Endothelial cell of umbilical vein (primary cell): ENCODE measurements at regions of chr3 and their contacts with region 1.

Region 1: DNA sequence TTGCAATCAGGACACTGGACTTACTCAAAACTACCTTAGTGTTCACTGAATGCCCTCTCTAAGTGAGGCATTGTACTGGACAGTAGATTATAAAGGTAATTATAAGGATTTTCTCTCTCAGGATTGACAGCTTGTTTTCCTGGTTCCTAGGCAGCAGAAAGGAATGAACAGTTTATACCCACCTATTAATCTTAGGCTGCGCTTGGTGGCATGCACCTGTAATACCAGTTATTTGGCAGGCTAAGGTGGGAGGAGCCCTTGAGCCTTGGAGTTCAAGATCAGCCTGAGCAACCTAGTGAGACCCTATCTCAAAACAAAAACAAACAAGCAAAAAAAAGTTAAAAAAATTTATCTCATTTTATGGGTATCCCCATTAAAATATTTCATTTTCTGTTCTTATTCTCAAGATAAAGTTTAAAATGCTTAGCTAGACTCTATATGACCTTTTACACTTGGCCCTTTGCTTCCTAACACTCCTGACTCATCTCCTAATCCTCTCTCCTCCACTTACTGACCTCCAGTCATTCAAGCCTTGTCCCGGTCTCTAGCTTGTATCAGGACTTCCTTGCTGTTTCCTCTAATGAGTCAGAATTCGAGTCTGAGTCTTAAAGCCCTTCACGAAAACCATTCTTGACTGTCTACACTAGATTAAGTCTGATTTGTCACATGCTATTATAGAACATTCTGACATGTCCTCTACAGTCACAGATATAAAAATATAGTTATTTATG is 348.6 kb downstream of the NLGN1 start:
- DNase-seq: peak; percentile 93
- H3K4me3 ChIP-seq: no peak overlapping the region
- H3K27ac ChIP-seq: peak overlapping the region; percentile 96
- H3K4me1 ChIP-seq: peaks cover 97% of the 10 kb centered on the region
- H3K27me3 ChIP-seq: no peaks in the 10 kb centered on the region
- CTCF ChIP-seq: no peak
- POLR2A ChIP-seq: no peak

Region 2: DNA sequence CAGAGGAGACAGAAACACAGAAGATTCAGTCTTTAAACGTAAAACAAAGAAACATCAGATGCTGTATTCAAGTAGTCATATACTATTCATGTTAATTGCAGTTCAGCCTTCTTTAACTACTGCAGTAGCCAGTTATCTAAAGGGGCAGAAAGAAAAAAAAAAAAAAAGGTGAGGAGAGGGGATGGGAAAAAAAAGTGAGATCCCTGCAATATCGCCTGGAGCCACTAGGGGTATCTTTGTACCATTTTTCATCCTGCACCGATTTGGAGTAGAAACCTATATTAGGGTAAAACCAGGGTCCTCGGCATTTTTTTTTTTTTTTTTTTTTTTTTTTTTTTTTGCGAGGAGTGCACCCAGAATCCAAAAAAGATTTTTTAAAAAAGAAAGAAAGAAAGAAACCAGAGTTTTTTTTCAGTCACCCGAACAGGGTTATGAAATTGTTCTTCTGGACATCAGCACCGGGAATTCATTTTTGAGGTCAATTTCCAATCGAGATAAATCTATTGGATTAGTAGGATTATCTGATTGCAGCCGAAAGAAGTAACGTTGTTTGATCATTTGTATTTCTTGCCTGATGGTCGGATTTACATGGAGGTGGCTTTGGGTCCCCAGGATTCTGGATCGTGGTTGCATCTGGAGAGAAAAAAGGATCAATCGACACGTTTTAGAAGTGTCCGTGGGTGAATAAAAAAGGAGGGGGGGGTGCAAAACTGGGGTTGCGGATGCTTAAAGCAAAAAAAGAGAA is 161.9 kb before region 1 on chr3:
- CTCF ChIA-PET with region 1: interaction called, 3 read pairs
- POLR2A ChIA-PET with region 1: no interaction called
- dilution Hi-C with region 1: no loop called
- intact Hi-C with region 1: loop called (anchors 2 kb)
- DNase-seq: peak; percentile 84
- H3K4me3 ChIP-seq: peak overlapping the region; percentile 62 to 99 (median 99)
- H3K27ac ChIP-seq: peak overlapping the region; percentile 64
- H3K4me1 ChIP-seq: peaks cover 5% of the 10 kb centered on the region
- H3K27me3 ChIP-seq: no peaks in the 10 kb centered on the region
- CTCF ChIP-seq: peak; percentile 54 to 72
- POLR2A ChIP-seq: no peak

Region 3: GRCh38 chr3:173761161-173761560 is 15.0 kb after region 1 on chr3:
- CTCF ChIA-PET with region 1: interaction called, 11 read pairs
- POLR2A ChIA-PET with region 1: no interaction called
- dilution Hi-C with region 1: no loop called
- intact Hi-C with region 1: no loop called
- DNase-seq: peak; percentile 62
- H3K4me3 ChIP-seq: no peak overlapping the region
- H3K27ac ChIP-seq: no peak overlapping the region
- H3K4me1 ChIP-seq: peaks cover 3% of the 10 kb centered on the region
- H3K27me3 ChIP-seq: no peaks in the 10 kb centered on the region
- CTCF ChIP-seq: no peak
- POLR2A ChIP-seq: no peak

Region 4: GRCh38 chr3:173938616-173939015 is 192.5 kb after region 1 on chr3:
- CTCF ChIA-PET with region 1: no interaction called
- POLR2A ChIA-PET with region 1: no interaction called
- dilution Hi-C with region 1: no loop called
- intact Hi-C with region 1: loop called (anchors 1 kb)
- DNase-seq: no peak
- H3K4me3 ChIP-seq: no peak overlapping the region
- H3K27ac ChIP-seq: no peak overlapping the region
- H3K4me1 ChIP-seq: peaks cover 19% of the 10 kb centered on the region
- H3K27me3 ChIP-seq: no peaks in the 10 kb centered on the region
- CTCF ChIP-seq: no peak
- POLR2A ChIP-seq: no peak

Region 5: DNA sequence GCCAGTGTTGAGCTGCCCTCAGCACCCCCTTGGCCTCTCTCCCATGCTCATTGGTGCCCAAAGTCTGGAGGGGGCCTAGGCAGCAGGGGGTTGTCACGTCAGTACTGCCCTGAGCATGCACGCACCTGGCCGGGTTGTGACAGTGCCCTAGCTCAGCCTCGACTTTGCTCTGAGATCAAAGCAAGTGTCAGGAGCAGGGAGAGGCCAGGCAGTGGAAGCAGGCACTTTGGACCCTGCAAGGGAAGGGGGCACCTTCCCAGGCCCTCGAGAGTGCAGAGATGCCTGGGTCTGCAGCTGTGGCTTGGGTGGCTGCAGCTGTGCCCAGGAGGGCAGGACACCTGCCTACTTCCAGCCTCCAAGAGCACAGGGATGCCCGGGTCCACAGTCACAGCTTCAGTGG is 212.7 kb after region 1 on chr3:
- CTCF ChIA-PET with region 1: no interaction called
- POLR2A ChIA-PET with region 1: no interaction called
- dilution Hi-C with region 1: no loop called
- intact Hi-C with region 1: no loop called
- DNase-seq: no peak
- H3K4me3 ChIP-seq: no peak overlapping the region
- H3K27ac ChIP-seq: no peak overlapping the region
- H3K4me1 ChIP-seq: no peaks in the 10 kb centered on the region
- H3K27me3 ChIP-seq: no peaks in the 10 kb centered on the region
- CTCF ChIP-seq: no peak
- POLR2A ChIP-seq: no peak

Region 6: DNA sequence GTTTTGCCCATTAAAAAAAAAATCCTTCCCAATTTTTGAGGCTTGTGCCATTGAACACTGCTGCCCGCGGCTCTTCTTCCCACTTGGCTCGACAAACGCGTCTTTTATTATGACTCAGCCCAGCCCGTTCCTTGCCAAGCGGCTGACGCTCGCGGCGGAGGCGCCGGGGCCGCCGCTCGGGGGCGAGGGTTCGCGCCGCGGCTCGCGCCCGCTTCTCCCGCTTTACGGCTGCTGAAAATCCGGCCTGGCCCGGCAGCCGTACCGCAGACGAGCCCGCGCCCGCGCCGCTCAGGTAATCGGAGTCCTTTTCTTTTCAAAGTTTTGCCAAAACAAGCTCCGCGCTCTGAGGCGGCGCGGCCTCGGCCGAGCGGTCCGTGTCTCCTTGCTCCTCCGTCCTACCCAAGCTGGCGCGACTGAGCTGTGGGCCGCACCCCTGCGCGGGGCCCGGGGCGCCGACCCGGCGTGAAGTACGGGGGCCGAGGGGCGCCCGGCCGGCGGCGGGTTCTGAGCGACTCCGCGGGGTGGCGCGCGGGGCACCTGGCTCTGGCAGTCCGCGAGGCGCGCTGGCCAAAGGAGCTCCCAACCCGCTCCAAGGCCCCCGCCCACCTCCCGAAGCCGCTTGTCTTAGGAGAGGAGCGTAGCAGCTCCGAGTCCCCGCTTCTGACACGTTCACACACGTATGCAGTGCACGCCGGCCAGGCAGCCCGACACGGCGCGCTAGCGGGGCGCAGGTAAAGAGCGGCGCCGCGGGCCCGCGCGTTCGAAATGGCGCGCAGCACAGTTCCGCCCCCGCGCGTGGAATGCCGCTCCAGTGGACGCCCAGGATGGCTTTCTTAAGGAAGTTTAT is 694.8 kb after region 1 on chr3:
- CTCF ChIA-PET with region 1: no interaction called
- POLR2A ChIA-PET with region 1: no interaction called
- dilution Hi-C with region 1: no loop called
- intact Hi-C with region 1: loop called (anchors 5 kb)
- DNase-seq: peak; percentile 90
- H3K4me3 ChIP-seq: peak overlapping the region; percentile 74 to 91 (median 78)
- H3K27ac ChIP-seq: peak overlapping the region; percentile 90
- H3K4me1 ChIP-seq: peaks cover 21% of the 10 kb centered on the region
- H3K27me3 ChIP-seq: no peaks in the 10 kb centered on the region
- CTCF ChIP-seq: no peak
- POLR2A ChIP-seq: peak; percentile 39